Naive thymus-derived CD4-positive, alpha-beta T cell (primary cell): ENCODE measurements at regions of chr10 and their contacts with region 1.

Region 1: DNA sequence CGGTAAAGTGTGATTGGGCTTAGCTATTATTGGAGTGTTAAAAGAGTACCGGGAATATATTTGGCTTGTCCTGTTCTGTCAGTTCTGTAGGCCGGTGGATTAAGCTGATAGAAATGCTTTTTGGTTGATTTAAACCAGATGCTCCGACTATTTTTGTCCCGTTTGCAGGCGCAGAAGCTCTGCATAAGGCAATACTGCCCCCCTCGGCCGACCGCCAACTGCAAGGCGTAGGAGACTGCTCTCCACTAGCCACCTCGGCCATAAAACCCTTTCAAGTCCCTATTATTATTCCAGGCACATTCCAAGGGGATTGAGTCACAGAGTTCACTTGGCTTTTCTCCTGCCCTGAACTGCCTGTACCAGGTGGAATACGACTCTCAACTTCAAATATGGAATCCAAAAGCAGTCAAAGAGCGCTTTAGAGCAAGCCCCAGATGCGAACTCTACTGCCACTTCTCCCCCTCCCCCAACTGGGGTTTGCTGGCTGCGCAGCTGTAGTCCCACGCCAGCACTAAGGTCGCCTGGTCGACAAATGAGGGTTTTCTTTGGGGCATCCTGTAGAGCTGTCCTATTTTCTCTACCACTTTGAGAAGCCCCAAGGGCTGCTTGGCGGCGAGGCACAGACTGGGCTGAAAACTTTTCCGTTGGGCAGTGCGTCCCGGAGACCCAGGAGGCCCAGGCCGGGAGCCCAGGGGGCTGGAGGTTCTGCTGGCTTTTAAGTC is 108.3 kb downstream of the REEP3 start:
- DNase-seq: peak; percentile 61 to 81 (median 78)
- ATAC-seq: peak; percentile 81
- H3K4me3 ChIP-seq: peak overlapping the region; percentile 90
- H3K4me3 Mint-ChIP-seq: peak overlapping the region; percentile 87 to 98 (median 95)
- H3K27ac ChIP-seq: peak overlapping the region; percentile 69
- H3K27ac Mint-ChIP-seq: peak overlapping the region; percentile 79 to 95 (median 90)
- H3K4me1 ChIP-seq: peaks cover 0 to 17% of the 10 kb centered on the region in 2 donors
- H3K4me1 Mint-ChIP-seq: peaks cover 19 to 40% (median 26%) of the 10 kb centered on the region in 7 donors
- H3K27me3 ChIP-seq: no peaks in the 10 kb centered on the region
- H3K27me3 Mint-ChIP-seq: peaks cover 0 to 3% (median 0%) of the 10 kb centered on the region in 5 donors

Region 2: DNA sequence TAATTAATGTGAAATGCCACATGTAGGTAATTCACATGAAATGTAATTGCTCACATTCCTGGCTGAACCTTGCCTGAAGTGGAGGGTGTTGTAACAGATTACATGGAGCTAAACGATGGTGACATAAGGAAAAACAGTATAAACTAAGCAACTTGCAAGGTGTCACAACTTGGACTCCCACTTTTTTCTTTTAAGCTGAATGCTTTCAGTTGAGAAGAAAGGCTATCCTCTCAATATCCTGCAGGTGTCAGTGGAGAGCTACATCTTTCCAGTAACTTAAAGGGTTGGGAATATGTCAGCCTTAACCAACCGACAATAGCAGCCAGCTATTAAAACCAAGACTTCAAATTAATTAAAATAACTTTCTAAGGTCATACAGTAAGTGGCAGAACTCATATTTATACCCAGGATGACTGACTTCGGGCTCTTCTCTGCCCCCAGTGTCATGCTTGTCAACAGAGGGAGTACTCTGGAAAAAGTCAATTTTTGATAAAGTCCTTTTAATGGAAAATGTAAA is 462.7 kb before region 1 on chr10:
- CTCF ChIA-PET with region 1: interaction called, 62 read pairs
- POLR2A ChIA-PET with region 1: interaction called, 7 read pairs
- intact Hi-C with region 1: loop called (anchors 1 kb)
- DNase-seq: peak in 7 of 9 donors; percentile 36 to 65 (median 55)
- ATAC-seq: peak; percentile 79
- H3K4me3 ChIP-seq: no peak overlapping the region
- H3K4me3 Mint-ChIP-seq: no peak overlapping the region
- H3K27ac ChIP-seq: no peak overlapping the region
- H3K27ac Mint-ChIP-seq: peak overlapping the region in 6 of 9 donors; percentile 24 to 59 (median 46)
- H3K4me1 ChIP-seq: no peaks in the 10 kb centered on the region
- H3K4me1 Mint-ChIP-seq: peaks cover under 1 to 42% (median 2%) of the 10 kb centered on the region in 7 donors
- H3K27me3 ChIP-seq: no peaks in the 10 kb centered on the region
- H3K27me3 Mint-ChIP-seq: no peaks in the 10 kb centered on the region

Region 3: GRCh38 chr10:63227207-63227915 is 402.2 kb before region 1 on chr10:
- CTCF ChIA-PET with region 1: interaction called, 9 read pairs
- POLR2A ChIA-PET with region 1: interaction called, 3 read pairs
- intact Hi-C with region 1: loop called in 1 of 2 experiments (anchors 2 kb)
- DNase-seq: peak in 6 of 9 donors; percentile 35 to 63 (median 56)
- ATAC-seq: peak; percentile 43
- H3K4me3 ChIP-seq: no peak overlapping the region
- H3K4me3 Mint-ChIP-seq: peak overlapping the region; percentile 8 to 69 (median 53)
- H3K27ac ChIP-seq: peak overlapping the region; percentile 80
- H3K27ac Mint-ChIP-seq: peak overlapping the region; percentile 28 to 97 (median 94)
- H3K4me1 ChIP-seq: peaks cover 23 to 42% of the 10 kb centered on the region in 2 donors
- H3K4me1 Mint-ChIP-seq: peaks cover 26 to 86% (median 75%) of the 10 kb centered on the region in 7 donors
- H3K27me3 ChIP-seq: no peaks in the 10 kb centered on the region
- H3K27me3 Mint-ChIP-seq: no peaks in the 10 kb centered on the region

Region 4: GRCh38 chr10:63421591-63421990 is 207.9 kb before region 1 on chr10:
- CTCF ChIA-PET with region 1: interaction called, 3 read pairs
- POLR2A ChIA-PET with region 1: no interaction called
- intact Hi-C with region 1: loop called in 1 of 2 experiments (anchors 1 kb)
- DNase-seq: peak in 7 of 9 donors; percentile 35 to 71 (median 53)
- ATAC-seq: peak; percentile 95
- H3K4me3 ChIP-seq: no peak overlapping the region
- H3K4me3 Mint-ChIP-seq: peak overlapping the region in 9 of 10 donors; percentile 49 to 73 (median 68)
- H3K27ac ChIP-seq: peak overlapping the region; percentile 36
- H3K27ac Mint-ChIP-seq: peak overlapping the region; percentile 37 to 97 (median 91)
- H3K4me1 ChIP-seq: peaks cover 0 to 15% of the 10 kb centered on the region in 2 donors
- H3K4me1 Mint-ChIP-seq: peaks cover 16 to 61% (median 49%) of the 10 kb centered on the region in 7 donors
- H3K27me3 ChIP-seq: no peaks in the 10 kb centered on the region
- H3K27me3 Mint-ChIP-seq: no peaks in the 10 kb centered on the region